B cell (primary cell): ENCODE measurements at regions of chr2 and their contacts with region 1.

Region 1: GRCh38 chr2:43576981-43577892 is 18.6 kb downstream of the THADA start:
- DNase-seq: peak; percentile 60
- ATAC-seq: no peak
- H3K4me3 ChIP-seq: no peak overlapping the region
- H3K4me3 Mint-ChIP-seq: no peak overlapping the region
- H3K27ac ChIP-seq: no peak overlapping the region
- H3K27ac Mint-ChIP-seq: no peak overlapping the region
- H3K4me1 ChIP-seq: no peaks in the 10 kb centered on the region
- H3K4me1 Mint-ChIP-seq: no peaks in the 10 kb centered on the region
- H3K27me3 ChIP-seq: no peaks in the 10 kb centered on the region
- H3K27me3 Mint-ChIP-seq: no peaks in the 10 kb centered on the region
- CTCF ChIP-seq: peak; percentile 95

Region 2: DNA sequence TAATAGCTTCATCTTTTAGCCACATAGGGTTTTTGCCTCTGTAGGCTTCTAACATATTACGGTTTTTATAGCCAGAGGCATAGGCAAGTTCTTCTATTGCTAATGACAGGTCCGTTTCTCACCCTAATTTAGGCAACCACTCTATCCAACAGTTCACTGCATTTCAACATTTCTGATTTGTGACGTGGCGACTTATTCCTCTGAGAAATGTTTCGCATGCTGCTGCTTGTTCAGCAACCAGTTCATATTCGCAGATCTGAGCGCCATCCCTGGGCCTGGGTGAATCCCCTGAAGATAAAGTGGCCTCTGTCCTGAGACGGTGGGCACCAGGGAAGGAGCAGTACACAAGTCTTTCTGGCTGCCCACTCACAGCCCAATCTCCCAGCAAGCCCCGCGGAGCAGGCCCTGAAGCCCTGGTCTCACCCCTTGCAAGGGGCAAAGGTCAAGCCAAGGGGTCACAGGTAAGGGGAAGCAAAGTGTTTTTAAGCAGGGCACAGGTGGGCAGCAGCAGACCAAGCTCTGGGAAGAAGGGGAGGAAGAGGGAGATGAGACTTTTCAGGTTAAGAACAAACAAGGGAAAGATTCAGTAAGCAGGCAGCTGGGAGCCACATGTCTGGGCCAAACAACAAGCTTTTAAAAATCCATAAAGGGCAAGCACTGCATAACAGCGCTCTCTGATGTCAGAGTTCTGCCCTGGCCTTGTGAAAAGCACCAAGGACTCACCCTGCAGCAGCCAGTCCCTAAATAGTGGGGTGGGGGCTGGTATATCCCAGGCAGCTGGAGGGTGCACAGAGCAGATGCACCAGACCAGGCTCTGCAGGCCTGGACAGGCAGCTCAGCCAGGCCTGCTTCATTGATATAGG is 1205.4 kb before region 1 on chr2:
- CTCF ChIA-PET with region 1: no interaction called
- POLR2A ChIA-PET with region 1: no interaction called
- intact Hi-C with region 1: loop called (anchors 5 kb)
- DNase-seq: no peak
- ATAC-seq: no peak
- H3K4me3 ChIP-seq: no peak overlapping the region
- H3K4me3 Mint-ChIP-seq: no peak overlapping the region
- H3K27ac ChIP-seq: no peak overlapping the region
- H3K27ac Mint-ChIP-seq: no peak overlapping the region
- H3K4me1 ChIP-seq: no peaks in the 10 kb centered on the region
- H3K4me1 Mint-ChIP-seq: no peaks in the 10 kb centered on the region
- H3K27me3 ChIP-seq: no peaks in the 10 kb centered on the region
- H3K27me3 Mint-ChIP-seq: peaks cover 4% of the 10 kb centered on the region
- CTCF ChIP-seq: no peak

Region 3: DNA sequence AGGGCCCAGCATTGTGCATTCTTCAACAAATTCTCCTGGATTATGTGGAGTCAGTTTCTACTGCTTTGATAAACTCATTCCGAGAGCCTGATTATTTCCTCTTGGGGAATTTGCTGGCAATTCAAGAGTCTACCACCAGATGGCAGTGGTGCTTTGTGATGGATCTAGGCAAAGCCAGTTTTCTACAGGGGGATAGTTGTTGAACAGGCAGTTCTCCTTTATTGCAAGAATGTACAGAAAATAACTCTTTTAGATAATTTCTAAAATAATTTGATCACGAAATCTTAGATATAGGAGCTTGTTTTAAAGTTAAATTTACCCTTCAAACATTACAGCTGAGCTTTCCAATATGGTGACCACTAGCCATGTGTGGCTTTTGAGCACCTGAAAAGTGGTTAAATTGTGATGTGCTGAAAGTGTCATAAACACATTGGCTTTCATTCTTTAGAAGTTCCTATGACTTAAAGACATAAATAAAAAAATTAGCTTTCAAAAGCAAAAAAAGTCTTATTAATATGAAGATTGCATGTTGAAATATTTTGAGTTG is 718.2 kb before region 1 on chr2:
- CTCF ChIA-PET with region 1: interaction called, 25 read pairs
- POLR2A ChIA-PET with region 1: no interaction called
- intact Hi-C with region 1: loop called (anchors 1 kb)
- DNase-seq: peak; percentile 72
- ATAC-seq: peak; percentile 53
- H3K4me3 ChIP-seq: no peak overlapping the region
- H3K4me3 Mint-ChIP-seq: no peak overlapping the region
- H3K27ac ChIP-seq: no peak overlapping the region
- H3K27ac Mint-ChIP-seq: no peak overlapping the region
- H3K4me1 ChIP-seq: no peaks in the 10 kb centered on the region
- H3K4me1 Mint-ChIP-seq: no peaks in the 10 kb centered on the region
- H3K27me3 ChIP-seq: no peaks in the 10 kb centered on the region
- H3K27me3 Mint-ChIP-seq: peaks cover 3% of the 10 kb centered on the region
- CTCF ChIP-seq: peak; percentile 92

Region 4: GRCh38 chr2:43559391-43560230 is 17.6 kb before region 1 on chr2:
- CTCF ChIA-PET with region 1: interaction called, 17 read pairs
- POLR2A ChIA-PET with region 1: no interaction called
- intact Hi-C with region 1: no loop called
- DNase-seq: no peak
- ATAC-seq: no peak
- H3K4me3 ChIP-seq: no peak overlapping the region
- H3K4me3 Mint-ChIP-seq: no peak overlapping the region
- H3K27ac ChIP-seq: no peak overlapping the region
- H3K27ac Mint-ChIP-seq: no peak overlapping the region
- H3K4me1 ChIP-seq: no peaks in the 10 kb centered on the region
- H3K4me1 Mint-ChIP-seq: no peaks in the 10 kb centered on the region
- H3K27me3 ChIP-seq: no peaks in the 10 kb centered on the region
- H3K27me3 Mint-ChIP-seq: no peaks in the 10 kb centered on the region
- CTCF ChIP-seq: no peak

Region 5: GRCh38 chr2:43595603-43596412 is 18.6 kb after region 1 on chr2 and contains the start of gene THADA:
- CTCF ChIA-PET with region 1: interaction called, 11 read pairs
- POLR2A ChIA-PET with region 1: interaction called, 4 read pairs
- intact Hi-C with region 1: no loop called
- DNase-seq: peak; percentile 98
- ATAC-seq: peak; percentile 98
- H3K4me3 ChIP-seq: peak within 1 kb of the TSS; percentile 69 to 94 (median 80)
- H3K4me3 Mint-ChIP-seq: peak within 1 kb of the TSS; percentile 98
- H3K27ac ChIP-seq: peak within 1 kb of the TSS; percentile 94
- H3K27ac Mint-ChIP-seq: peak within 1 kb of the TSS; percentile 96
- H3K4me1 ChIP-seq: peaks cover 12 to 21% of the 10 kb centered on the region in 2 donors
- H3K4me1 Mint-ChIP-seq: peaks cover 24% of the 10 kb centered on the region
- H3K27me3 ChIP-seq: no peaks in the 10 kb centered on the region
- H3K27me3 Mint-ChIP-seq: peaks cover 3% of the 10 kb centered on the region
- CTCF ChIP-seq: no peak
- total RNA-seq, gene THADA: 48.5 and 53.7 TPM in 2 replicates

Region 6: DNA sequence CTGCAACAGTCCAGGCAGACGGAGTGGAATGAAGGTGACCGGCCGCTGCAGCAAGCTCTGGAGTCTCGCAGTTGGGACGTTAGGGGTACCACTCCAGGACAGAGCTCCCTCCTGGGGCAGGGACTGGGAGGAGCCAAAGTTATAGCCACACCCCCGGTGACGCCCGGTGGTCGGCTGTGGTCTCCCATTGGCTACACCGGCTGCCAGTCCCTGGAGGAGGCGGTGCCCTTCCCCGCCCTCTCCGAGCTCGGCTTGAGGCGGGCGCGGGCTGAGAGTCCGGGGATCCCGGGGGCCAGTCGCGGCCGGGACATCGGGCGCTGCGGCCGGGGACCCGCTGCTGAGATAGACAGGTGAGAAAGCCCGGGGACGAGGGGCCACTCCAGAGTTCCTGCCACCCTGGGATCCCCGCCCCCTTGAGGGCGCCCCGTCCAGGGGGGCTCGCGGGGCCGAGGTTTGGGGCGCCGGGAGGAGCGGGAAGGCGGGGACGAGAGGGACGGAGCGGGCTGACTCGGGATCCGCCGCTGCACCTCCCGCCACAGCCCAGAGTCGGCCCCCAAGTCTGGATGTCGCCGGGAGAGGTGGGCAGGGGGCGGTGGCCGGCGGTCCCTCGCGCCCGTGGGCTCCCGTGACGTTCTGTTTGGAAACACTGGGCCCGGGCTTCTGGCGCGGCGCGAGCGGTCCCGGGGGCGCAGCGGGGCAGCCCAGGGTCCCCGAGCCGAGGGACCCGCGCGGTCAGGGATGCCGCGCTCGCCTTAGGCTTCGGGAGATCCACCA is 60.0 kb after region 1 on chr2 and contains the start of gene PLEKHH2:
- CTCF ChIA-PET with region 1: no interaction called
- POLR2A ChIA-PET with region 1: no interaction called
- intact Hi-C with region 1: no loop called
- DNase-seq: peak; percentile 84
- ATAC-seq: peak; percentile 100
- H3K4me3 ChIP-seq: peak within 1 kb of the TSS; percentile 34 to 64 (median 61)
- H3K4me3 Mint-ChIP-seq: peak within 1 kb of the TSS; percentile 85
- H3K27ac ChIP-seq: no peak within 1 kb of the TSS
- H3K27ac Mint-ChIP-seq: no peak within 1 kb of the TSS
- H3K4me1 ChIP-seq: peaks cover 15 to 16% of the 10 kb centered on the region in 2 donors
- H3K4me1 Mint-ChIP-seq: peaks cover 15% of the 10 kb centered on the region
- H3K27me3 ChIP-seq: peaks cover 0 to 36% (median 23%) of the 10 kb centered on the region in 4 experiments
- H3K27me3 Mint-ChIP-seq: peaks cover 56% of the 10 kb centered on the region
- CTCF ChIP-seq: no peak
- total RNA-seq, gene PLEKHH2: 0.17 and 0.58 TPM in 2 replicates